ENCODE measurements at regions of chr1 and their contacts with region 1.

Region 1: GRCh38 chr1:110948038-110948810 is 15.5 kb downstream of the LRIF1 start:
- DNase-seq: peak in 1 of 2 experiments; percentile 5
- ATAC-seq: no peak
- H3K4me3 ChIP-seq: no peak overlapping the region
- H3K27ac ChIP-seq: no peak overlapping the region
- H3K4me1 ChIP-seq: no peaks in the 10 kb centered on the region
- CTCF ChIP-seq: no peak
- EP300 ChIP-seq: no peak
- POLR2A ChIP-seq: no peak
- RAD21 ChIP-seq: no peak

Region 2: GRCh38 chr1:110963691-110964399 is 15.6 kb after region 1 on chr1 and contains the start of gene LRIF1:
- CTCF ChIA-PET with region 1: no interaction called
- POLR2A ChIA-PET with region 1: interaction called, 11 read pairs
- DNase-seq: peak; percentile 77 to 99
- ATAC-seq: peak; percentile 98 to 99
- H3K4me3 ChIP-seq: peak within 1 kb of the TSS; percentile 73
- H3K27ac ChIP-seq: peak within 1 kb of the TSS; percentile 89 to 98
- H3K4me1 ChIP-seq: no peaks in the 10 kb centered on the region
- CTCF ChIP-seq: no peak; the same call in 2 of the 3 replicates
- EP300 ChIP-seq: no peak
- POLR2A ChIP-seq: peak; percentile 93
- RAD21 ChIP-seq: no peak
- polyA plus RNA-seq, gene LRIF1: 29.1 and 40.8 TPM in 2 replicates

Region 3: GRCh38 chr1:111148376-111148881 is 200.2 kb after region 1 on chr1:
- CTCF ChIA-PET with region 1: no interaction called
- POLR2A ChIA-PET with region 1: no interaction called
- DNase-seq: no peak
- ATAC-seq: no peak
- H3K4me3 ChIP-seq: no peak overlapping the region
- H3K27ac ChIP-seq: no peak overlapping the region
- H3K4me1 ChIP-seq: no peaks in the 10 kb centered on the region
- CTCF ChIP-seq: no peak
- EP300 ChIP-seq: no peak
- POLR2A ChIP-seq: no peak
- RAD21 ChIP-seq: no peak

Measured in A549 (cell line).